ENCODE measurements at regions of chr10 and their contacts with region 1.

Region 1: GRCh38 chr10:104353325-104354048 is at the start of gene CFAP58:
- DNase-seq: peak; percentile 93 to 94
- H3K4me3 ChIP-seq: peak within 1 kb of the TSS; percentile 27
- H3K4me3 Mint-ChIP-seq: no peak within 1 kb of the TSS
- H3K27ac Mint-ChIP-seq: no peak within 1 kb of the TSS
- H3K4me1 ChIP-seq: peaks cover 7% of the 10 kb centered on the region; the same call in 1 of the 2 replicates
- H3K4me1 Mint-ChIP-seq: no peaks in the 10 kb centered on the region
- H3K27me3 ChIP-seq: no peaks in the 10 kb centered on the region; the same call in 1 of the 2 replicates
- H3K27me3 Mint-ChIP-seq: peaks cover 9% of the 10 kb centered on the region
- CTCF ChIP-seq: peak; percentile 44 to 85
- total RNA-seq, gene CFAP58: not detected in 2 replicates

Region 2: DNA sequence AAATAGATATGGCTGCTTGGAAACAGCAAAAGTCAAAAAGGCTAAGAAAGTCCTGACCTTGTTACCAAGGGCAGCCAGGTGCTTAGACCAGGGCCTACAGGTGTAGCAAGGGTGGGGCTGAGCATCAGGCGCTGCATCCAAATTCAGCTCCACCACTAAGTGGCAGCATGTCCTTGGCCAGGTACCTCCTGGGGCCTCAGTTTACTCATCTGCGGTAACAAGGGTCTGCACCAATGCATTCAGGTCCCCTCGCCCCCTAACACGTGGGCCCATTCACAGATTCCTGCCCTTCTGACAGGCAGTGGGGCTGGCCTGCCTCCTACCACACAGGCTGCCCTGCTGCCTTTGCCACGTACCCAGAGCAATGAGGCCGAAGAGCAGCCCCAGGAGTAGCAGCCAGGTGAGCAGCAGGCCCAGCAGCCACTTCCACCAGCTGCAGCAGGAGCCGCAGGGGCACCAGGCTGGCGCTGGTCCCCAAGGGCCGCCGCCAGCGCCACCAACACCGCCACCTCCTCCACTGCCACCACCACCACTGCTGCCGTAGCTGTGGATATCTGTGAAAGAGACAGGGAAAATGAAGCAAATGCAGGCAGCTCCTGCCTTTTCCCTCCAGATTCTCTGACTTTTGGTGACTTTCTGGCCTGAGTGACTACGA is 296.7 kb before region 1 on chr10:
- CTCF ChIA-PET with region 1: no interaction called
- POLR2A ChIA-PET with region 1: no interaction called
- intact Hi-C with region 1: no loop called
- DNase-seq: no peak
- H3K4me3 ChIP-seq: no peak overlapping the region
- H3K4me3 Mint-ChIP-seq: no peak overlapping the region
- H3K27ac Mint-ChIP-seq: no peak overlapping the region
- H3K4me1 ChIP-seq: peaks cover 13% of the 10 kb centered on the region; the same call in 1 of the 2 replicates
- H3K4me1 Mint-ChIP-seq: no peaks in the 10 kb centered on the region
- H3K27me3 ChIP-seq: no peaks in the 10 kb centered on the region
- H3K27me3 Mint-ChIP-seq: no peaks in the 10 kb centered on the region
- CTCF ChIP-seq: no peak

Region 3: GRCh38 chr10:104291439-104291951 is 62.0 kb before region 1 on chr10:
- CTCF ChIA-PET with region 1: interaction called, 5 read pairs
- POLR2A ChIA-PET with region 1: no interaction called
- intact Hi-C with region 1: loop called (anchors 1 kb)
- DNase-seq: peak; percentile 86 to 91
- H3K4me3 ChIP-seq: no peak overlapping the region
- H3K4me3 Mint-ChIP-seq: peak overlapping the region; percentile 48
- H3K27ac Mint-ChIP-seq: no peak overlapping the region
- H3K4me1 ChIP-seq: peaks cover 13% of the 10 kb centered on the region
- H3K4me1 Mint-ChIP-seq: peaks cover 7% of the 10 kb centered on the region
- H3K27me3 ChIP-seq: no peaks in the 10 kb centered on the region
- H3K27me3 Mint-ChIP-seq: peaks cover 3% of the 10 kb centered on the region
- CTCF ChIP-seq: peak; percentile 98 to 100

Region 4: GRCh38 chr10:104304962-104305361 is 48.5 kb before region 1 on chr10:
- CTCF ChIA-PET with region 1: interaction called, 11 read pairs
- POLR2A ChIA-PET with region 1: no interaction called
- intact Hi-C with region 1: loop called (anchors 1 kb)
- DNase-seq: no peak
- H3K4me3 ChIP-seq: no peak overlapping the region
- H3K4me3 Mint-ChIP-seq: no peak overlapping the region
- H3K27ac Mint-ChIP-seq: no peak overlapping the region
- H3K4me1 ChIP-seq: no peaks in the 10 kb centered on the region
- H3K4me1 Mint-ChIP-seq: peaks cover 8% of the 10 kb centered on the region
- H3K27me3 ChIP-seq: no peaks in the 10 kb centered on the region
- H3K27me3 Mint-ChIP-seq: no peaks in the 10 kb centered on the region
- CTCF ChIP-seq: no peak

Region 5: GRCh38 chr10:104337974-104338735 is 15.3 kb before region 1 on chr10 and contains the start of gene ITPRIP:
- CTCF ChIA-PET with region 1: interaction called, 12 read pairs
- POLR2A ChIA-PET with region 1: interaction called, 9 read pairs
- intact Hi-C with region 1: loop called (anchors 1 kb)
- DNase-seq: peak; percentile 59 to 69
- H3K4me3 ChIP-seq: peak within 1 kb of the TSS; percentile 76
- H3K4me3 Mint-ChIP-seq: peak within 1 kb of the TSS; percentile 99
- H3K27ac Mint-ChIP-seq: peak within 1 kb of the TSS; percentile 99
- H3K4me1 ChIP-seq: peaks cover 22% of the 10 kb centered on the region
- H3K4me1 Mint-ChIP-seq: peaks cover 17% of the 10 kb centered on the region
- H3K27me3 ChIP-seq: no peaks in the 10 kb centered on the region
- H3K27me3 Mint-ChIP-seq: no peaks in the 10 kb centered on the region
- CTCF ChIP-seq: peak in 1 of 2 experiments; percentile 46
- total RNA-seq, gene ITPRIP: 3.1 and 3.4 TPM in 2 replicates